ENCODE measurements at regions of chr1 and their contacts with region 1.

Region 1: GRCh38 chr1:224149713-224150112 is 33.3 kb upstream of the DEGS1 start:
- DNase-seq: no peak
- ATAC-seq: no peak
- H3K4me3 Mint-ChIP-seq: no peak overlapping the region
- H3K27ac Mint-ChIP-seq: no peak overlapping the region
- H3K4me1 Mint-ChIP-seq: no peaks in the 10 kb centered on the region
- H3K27me3 Mint-ChIP-seq: no peaks in the 10 kb centered on the region
- CTCF ChIP-seq: no peak

Region 2: GRCh38 chr1:224168859-224169380 is 19.2 kb after region 1 on chr1:
- CTCF ChIA-PET with region 1: interaction called, 11 read pairs
- POLR2A ChIA-PET with region 1: interaction called, 6 read pairs
- DNase-seq: no peak
- ATAC-seq: no peak
- H3K4me3 Mint-ChIP-seq: no peak overlapping the region
- H3K27ac Mint-ChIP-seq: peak overlapping the region; percentile 2; the same call in 1 of the 2 replicates
- H3K4me1 Mint-ChIP-seq: peaks cover 30% of the 10 kb centered on the region
- H3K27me3 Mint-ChIP-seq: no peaks in the 10 kb centered on the region
- CTCF ChIP-seq: no peak

Region 3: GRCh38 chr1:224182866-224183590 is 33.3 kb after region 1 on chr1 and contains the start of gene DEGS1:
- CTCF ChIA-PET with region 1: interaction called, 10 read pairs
- POLR2A ChIA-PET with region 1: no interaction called
- DNase-seq: peak; percentile 84
- ATAC-seq: peak; percentile 85
- H3K4me3 Mint-ChIP-seq: peak within 1 kb of the TSS; percentile 81
- H3K27ac Mint-ChIP-seq: peak within 1 kb of the TSS; percentile 69
- H3K4me1 Mint-ChIP-seq: peaks cover 31% of the 10 kb centered on the region
- H3K27me3 Mint-ChIP-seq: no peaks in the 10 kb centered on the region; the same call in 1 of the 2 replicates
- CTCF ChIP-seq: no peak
- total RNA-seq, gene DEGS1: 30.2 to 31.6 TPM (median 30.7 TPM) in 3 replicates

Measured in WTC11 (cell line).